Panc1 (cell line): ENCODE measurements at regions of chr13 and their contacts with region 1.

Region 1: DNA sequence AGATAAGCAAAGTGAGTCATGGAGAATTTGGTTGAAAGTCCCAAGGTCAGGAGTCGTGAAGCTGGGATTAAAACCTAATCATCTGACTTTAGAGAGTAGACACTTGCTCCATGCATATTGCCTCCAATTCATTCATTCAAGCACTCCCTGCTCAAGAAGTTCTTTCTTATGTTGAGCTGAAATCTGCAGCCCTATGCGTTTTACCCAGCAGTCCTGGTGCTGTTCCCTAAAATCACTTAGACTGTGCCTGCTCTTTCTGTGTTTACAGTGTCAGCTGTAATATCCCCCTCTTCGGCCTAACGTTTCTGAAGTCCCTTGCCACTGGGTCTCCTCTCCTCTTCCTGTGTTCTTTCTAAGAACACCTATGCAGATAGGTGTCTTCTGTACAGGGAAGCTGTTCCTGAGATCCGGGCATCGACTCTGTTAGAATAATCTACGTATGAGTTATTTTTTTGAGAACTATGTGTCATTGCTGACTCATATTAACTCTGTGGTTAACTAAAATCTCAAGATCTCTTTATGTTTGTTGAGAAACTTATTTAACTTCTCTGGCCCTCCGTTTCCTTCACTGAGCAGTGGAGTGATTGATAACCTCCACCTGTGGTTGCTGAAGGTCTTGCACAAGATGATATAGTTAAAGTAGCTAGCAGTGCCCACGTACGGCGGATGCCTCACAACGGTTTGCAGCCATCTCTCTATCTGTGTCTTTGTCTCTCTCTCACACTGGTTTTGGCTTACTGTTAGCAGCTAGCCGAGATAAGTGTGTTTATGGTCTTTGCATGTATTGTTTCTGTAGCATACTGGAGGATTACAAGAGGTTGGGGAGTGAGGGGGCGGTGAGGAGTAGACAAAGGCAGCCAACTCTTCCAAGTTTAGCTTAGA is 4.7 kb downstream of the ALOX5AP start:
- DNase-seq: no peak
- ATAC-seq: peak; percentile 76
- H3K4me3 ChIP-seq: peak overlapping the region; percentile 9 to 35; a peak in 2 of 4 replicates
- H3K27ac ChIP-seq: peak overlapping the region; percentile 91
- H3K4me1 ChIP-seq: peaks cover 48% of the 10 kb centered on the region
- H3K27me3 ChIP-seq: no peaks in the 10 kb centered on the region
- CTCF ChIP-seq: no peak

Region 2: DNA sequence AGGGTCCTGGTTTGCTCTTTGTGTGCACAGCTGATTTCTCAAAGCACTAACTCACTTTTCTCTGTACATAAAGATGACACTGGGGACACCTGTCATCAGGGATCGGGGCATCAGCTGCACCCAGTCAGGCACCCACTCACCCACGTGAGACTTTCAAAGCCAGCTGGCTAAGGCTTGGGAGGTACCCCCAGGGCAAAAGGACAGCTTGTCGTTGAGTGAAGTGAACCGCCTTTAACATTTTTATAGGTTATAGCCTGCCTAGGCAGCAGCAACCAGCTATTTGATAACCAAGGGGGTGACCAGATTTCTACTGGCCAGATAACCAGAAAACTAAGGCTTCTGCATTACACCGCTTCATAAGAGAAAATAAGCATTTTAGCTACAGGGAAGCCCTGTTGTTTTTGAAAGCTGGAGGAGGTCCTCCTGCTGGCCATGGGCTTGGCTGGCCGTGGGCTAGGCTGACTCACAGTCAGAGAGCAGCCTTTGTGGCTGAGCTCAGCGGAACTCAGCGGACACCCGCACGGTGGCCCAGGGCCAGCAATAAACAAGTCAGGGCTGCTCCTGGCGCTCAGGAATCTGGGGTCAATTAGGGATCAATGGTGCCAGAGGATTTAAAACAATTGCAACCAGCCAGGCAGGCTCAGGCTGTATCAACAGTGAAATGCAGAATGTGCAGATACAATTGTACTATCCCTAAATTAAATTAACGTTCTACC is 52.4 kb after region 1 on chr13:
- CTCF ChIA-PET with region 1: interaction called, 3 read pairs
- POLR2A ChIA-PET with region 1: no interaction called
- in situ Hi-C with region 1: no loop called
- intact Hi-C with region 1: loop called (anchors 10 kb)
- DNase-seq: no peak
- ATAC-seq: peak; percentile 89
- H3K4me3 ChIP-seq: 0 out of 4 replicates have a peak overlapping the region, but pooled peaks of 1 of the 2 experiments have one; percentile 14
- H3K27ac ChIP-seq: peak overlapping the region; percentile 92
- H3K4me1 ChIP-seq: peaks cover 48% of the 10 kb centered on the region
- H3K27me3 ChIP-seq: no peaks in the 10 kb centered on the region
- CTCF ChIP-seq: no peak